ENCODE measurements at regions of chr17 and their contacts with region 1.

Region 1: GRCh38 chr17:42928714-42929496 is 28.3 kb downstream of the G6PC1 start:
- DNase-seq: peak; percentile 32
- ATAC-seq: peak; percentile 97
- H3K4me3 Mint-ChIP-seq: no peak overlapping the region
- H3K27ac Mint-ChIP-seq: peak overlapping the region; percentile 72
- H3K4me1 Mint-ChIP-seq: peaks cover 14% of the 10 kb centered on the region
- H3K27me3 Mint-ChIP-seq: no peaks in the 10 kb centered on the region
- CTCF ChIP-seq: peak; percentile 45

Region 2: DNA sequence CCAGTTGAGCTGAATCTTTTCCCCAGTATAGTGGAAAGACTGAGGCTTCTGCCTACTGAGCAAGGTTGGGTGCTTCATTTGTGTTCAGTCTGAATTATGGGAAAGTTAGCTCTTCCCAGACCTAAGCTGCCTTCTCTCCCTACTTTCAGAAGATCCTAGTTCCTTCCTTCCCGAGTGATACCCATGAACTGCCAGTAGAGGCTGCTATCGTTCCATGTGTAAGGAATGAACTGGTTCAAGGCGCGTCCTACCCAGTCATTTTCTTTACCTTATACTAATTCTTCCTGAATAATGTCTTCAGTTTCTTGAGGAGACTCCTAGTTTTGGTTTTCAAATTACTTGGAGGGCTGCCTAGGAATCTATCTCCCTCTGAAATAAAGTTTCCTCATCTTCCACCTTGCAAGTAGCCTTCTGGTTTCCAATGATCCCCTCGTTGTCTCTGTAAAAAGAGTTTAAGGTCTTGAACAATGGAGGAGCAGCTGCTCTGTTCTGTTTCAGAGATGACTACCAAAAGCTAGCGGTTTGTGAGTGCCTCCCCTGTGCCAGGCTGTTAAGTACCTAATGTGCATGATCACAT is 85.5 kb before region 1 on chr17:
- CTCF ChIA-PET with region 1: interaction called, 52 read pairs
- POLR2A ChIA-PET with region 1: no interaction called
- DNase-seq: peak; percentile 46
- ATAC-seq: peak; percentile 74
- H3K4me3 Mint-ChIP-seq: no peak overlapping the region
- H3K27ac Mint-ChIP-seq: no peak overlapping the region
- H3K4me1 Mint-ChIP-seq: no peaks in the 10 kb centered on the region
- H3K27me3 Mint-ChIP-seq: no peaks in the 10 kb centered on the region
- CTCF ChIP-seq: peak; percentile 67

Region 3: DNA sequence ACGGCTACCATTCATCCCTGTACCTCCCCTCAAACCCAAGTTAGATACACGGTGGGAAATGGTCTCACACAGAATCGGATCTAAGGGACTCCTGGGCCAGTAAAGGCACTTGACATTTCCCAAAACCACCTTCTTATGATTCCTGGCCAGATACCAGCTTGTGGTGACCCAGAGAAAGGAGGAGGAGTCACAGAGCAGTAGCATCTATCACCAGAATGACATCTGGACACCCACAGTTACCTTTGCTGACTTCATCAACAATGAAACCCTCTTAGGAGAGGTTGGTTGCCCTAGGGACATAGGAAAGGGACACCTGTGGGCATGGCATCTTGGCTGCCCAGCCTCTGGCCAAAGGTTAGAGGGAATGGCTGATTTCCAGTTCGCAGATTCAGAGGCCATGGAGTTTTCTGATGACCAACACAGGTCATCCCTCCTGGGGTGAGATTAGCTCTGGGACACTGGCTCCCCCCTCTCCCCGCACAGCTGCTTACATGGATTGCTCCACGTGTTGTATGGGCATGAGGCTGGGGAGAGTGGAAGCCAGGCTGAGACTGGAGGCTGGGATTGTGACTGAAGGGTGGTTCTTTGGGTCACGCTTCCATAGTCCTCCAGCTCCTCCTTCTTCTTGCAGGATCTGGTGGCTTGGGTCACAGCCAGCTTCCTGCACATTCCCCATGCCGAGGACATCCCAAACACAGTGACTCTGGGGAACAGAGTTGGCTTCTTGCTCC is 79.3 kb before region 1 on chr17:
- CTCF ChIA-PET with region 1: interaction called, 52 read pairs
- POLR2A ChIA-PET with region 1: no interaction called
- DNase-seq: no peak
- ATAC-seq: no peak
- H3K4me3 Mint-ChIP-seq: no peak overlapping the region
- H3K27ac Mint-ChIP-seq: no peak overlapping the region
- H3K4me1 Mint-ChIP-seq: no peaks in the 10 kb centered on the region; the same call in 1 of the 2 replicates
- H3K27me3 Mint-ChIP-seq: no peaks in the 10 kb centered on the region
- CTCF ChIP-seq: no peak

Region 4: GRCh38 chr17:42891539-42892152 is 37.3 kb before region 1 on chr17:
- CTCF ChIA-PET with region 1: interaction called, 12 read pairs
- POLR2A ChIA-PET with region 1: no interaction called
- DNase-seq: peak; percentile 47
- ATAC-seq: peak; percentile 92
- H3K4me3 Mint-ChIP-seq: no peak overlapping the region
- H3K27ac Mint-ChIP-seq: peak overlapping the region; percentile 75; the same call in 1 of the 2 replicates
- H3K4me1 Mint-ChIP-seq: peaks cover 13% of the 10 kb centered on the region
- H3K27me3 Mint-ChIP-seq: peaks cover under 1% of the 10 kb centered on the region; the same call in 1 of the 2 replicates
- CTCF ChIP-seq: no peak

Measured in WTC11 (cell line).